ENCODE measurements at regions of chr10 and their contacts with region 1.

Region 1: GRCh38 chr10:53619671-53620070 is 847.1 kb upstream of the MBL2 start:
- DNase-seq: no peak
- H3K4me3 ChIP-seq: no peak overlapping the region
- H3K27ac ChIP-seq: no peak overlapping the region
- H3K4me1 ChIP-seq: no peaks in the 10 kb centered on the region
- H3K27me3 ChIP-seq: no peaks in the 10 kb centered on the region
- CTCF ChIP-seq: no peak
- POLR2A ChIP-seq: no peak

Region 2: GRCh38 chr10:53843736-53844362 is 224.2 kb after region 1 on chr10:
- intact Hi-C with region 1: no loop called
- DNase-seq: peak; percentile 60 to 62
- H3K4me3 ChIP-seq: no peak overlapping the region
- H3K27ac ChIP-seq: peak overlapping the region in 2 of 3 donors; percentile 7 to 26
- H3K4me1 ChIP-seq: peaks cover 0 to 5% of the 10 kb centered on the region in 2 donors
- H3K27me3 ChIP-seq: no peaks in the 10 kb centered on the region
- CTCF ChIP-seq: no peak
- POLR2A ChIP-seq: no peak

Region 3: GRCh38 chr10:54372179-54372578 is 752.5 kb after region 1 on chr10:
- intact Hi-C with region 1: loop called (anchors 10 kb)
- DNase-seq: no peak
- H3K4me3 ChIP-seq: no peak overlapping the region
- H3K27ac ChIP-seq: no peak overlapping the region
- H3K4me1 ChIP-seq: no peaks in the 10 kb centered on the region
- H3K27me3 ChIP-seq: no peaks in the 10 kb centered on the region
- CTCF ChIP-seq: no peak
- POLR2A ChIP-seq: no peak

Measured in thyroid gland (tissue), 4 donors.